ENCODE measurements at regions of chr1 and their contacts with region 1.

Region 1: DNA sequence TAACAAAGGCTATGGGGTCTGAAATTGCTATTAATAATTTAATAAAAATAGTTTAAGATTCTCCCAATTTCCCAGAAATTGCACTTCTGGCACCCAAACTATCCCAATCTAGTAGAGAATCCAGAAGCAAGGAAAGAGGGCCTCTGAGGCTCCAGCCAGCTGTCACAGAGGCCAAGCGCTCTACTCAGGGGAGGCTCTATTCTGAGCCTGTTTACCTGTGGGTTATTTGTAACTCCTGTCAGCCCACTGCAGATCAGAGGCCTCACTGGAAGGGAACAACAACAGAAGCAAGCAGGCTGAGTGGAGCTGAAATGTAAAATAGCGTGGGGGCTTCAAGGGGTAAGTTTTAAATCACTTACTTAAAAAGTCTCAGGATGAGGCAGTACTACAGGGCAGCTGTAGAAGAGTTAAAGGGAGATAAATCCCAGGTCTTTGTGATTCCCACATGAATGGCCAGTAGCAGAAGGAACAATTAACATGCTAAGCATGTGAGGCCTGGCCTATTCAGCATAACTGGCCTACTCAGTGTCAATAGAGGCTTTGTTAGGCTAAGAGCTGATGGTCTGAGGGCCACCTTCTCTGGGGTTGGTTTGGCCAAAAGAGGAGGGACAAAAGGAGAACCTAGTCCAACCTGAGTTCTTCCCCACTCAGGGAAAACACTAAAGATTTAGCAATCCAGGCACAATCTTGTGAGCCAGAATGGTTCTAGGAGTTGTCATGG is 12.8 kb downstream of the ZNF687 start:
- DNase-seq: no peak

Region 2: DNA sequence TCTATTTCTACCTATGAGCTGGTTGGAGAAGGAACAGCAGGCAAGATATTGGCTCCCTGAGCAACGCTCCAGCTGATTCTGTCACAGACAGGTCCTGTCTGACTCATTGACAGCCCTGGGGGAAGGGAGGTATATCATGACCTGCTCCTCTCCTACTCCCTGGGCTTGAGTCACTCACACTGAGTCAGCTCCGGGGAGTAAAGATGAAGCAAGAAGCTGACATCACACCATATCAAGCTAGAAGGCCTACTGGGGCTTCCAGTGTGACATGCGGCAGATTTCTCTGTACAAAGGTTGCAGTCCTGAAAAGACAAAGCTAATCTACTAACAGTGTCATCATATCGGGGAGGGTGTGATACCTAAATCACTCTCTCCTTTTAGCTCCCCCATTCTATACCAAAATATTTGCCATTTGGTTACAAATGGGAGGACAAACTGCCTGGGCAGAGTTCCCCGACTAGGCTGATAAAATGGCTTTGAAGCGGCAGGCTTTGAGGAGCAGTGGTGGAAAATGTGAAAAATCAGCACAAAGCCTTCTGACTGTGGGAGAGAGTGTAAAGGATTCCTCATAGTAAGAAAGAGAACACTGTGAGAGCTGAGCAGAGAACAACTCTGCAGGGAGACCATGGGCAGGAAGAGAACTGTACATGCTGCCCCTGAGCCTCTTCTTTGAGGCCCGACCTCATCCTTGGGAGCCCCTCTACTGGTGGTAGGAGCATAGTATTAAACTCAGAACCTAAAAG is 16.9 kb after region 1 on chr1:
- intact Hi-C with region 1: no loop called
- DNase-seq: no peak

Region 3: GRCh38 chr1:151340870-151341754 is 46.2 kb after region 1 on chr1:
- intact Hi-C with region 1: loop called (anchors 5 kb)
- DNase-seq: no peak

Region 4: GRCh38 chr1:151661751-151662150 is 366.8 kb after region 1 on chr1:
- intact Hi-C with region 1: no loop called
- DNase-seq: no peak

Measured in posterior vena cava (tissue), 2 donors.